Panc1 (cell line): ENCODE measurements at regions of chr7 and their contacts with region 1.

Region 1: GRCh38 chr7:95396136-95397032 is at the start of gene PON3:
- DNase-seq: peak; percentile 61
- ATAC-seq: peak; percentile 89
- H3K4me3 ChIP-seq: peak within 1 kb of the TSS; percentile 45 to 58
- H3K27ac ChIP-seq: no peak within 1 kb of the TSS
- H3K4me1 ChIP-seq: no peaks in the 10 kb centered on the region
- H3K27me3 ChIP-seq: no peaks in the 10 kb centered on the region
- CTCF ChIP-seq: peak; percentile 83
- total RNA-seq, gene PON3: 1.2 TPM

Region 2: DNA sequence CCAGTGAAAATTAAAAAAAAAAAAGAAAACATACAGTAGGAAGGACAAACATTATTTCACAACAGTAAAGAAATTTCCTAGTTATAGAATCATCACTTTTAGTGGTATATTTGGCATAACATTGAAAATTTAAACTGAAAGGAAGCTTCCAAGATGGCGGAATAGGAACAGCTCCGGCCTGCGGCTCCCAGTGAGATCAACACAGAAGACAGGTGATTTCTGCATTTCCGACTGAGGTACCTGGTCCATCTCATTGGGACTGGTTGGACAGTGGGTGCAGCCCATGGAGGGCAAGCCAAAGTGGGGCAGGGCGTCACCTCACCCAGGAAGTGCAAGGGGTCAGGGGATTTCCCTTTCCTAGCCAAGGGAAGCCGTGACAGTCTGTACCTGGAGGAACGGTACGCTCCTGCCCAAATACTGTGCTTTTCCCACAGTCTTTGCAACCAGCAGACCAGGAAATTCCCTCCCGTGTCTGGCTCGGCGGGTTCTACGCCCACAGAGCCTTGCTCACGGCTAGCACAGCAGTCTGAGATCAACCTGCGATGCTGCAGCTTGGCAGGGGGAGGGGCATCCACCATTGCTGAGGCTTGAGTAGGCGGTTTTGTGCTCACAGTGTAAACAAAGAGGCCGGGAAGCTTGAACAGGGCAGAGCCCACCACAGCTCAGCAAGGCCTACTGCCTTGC is 19.6 kb before region 1 on chr7:
- CTCF ChIA-PET with region 1: no interaction called
- POLR2A ChIA-PET with region 1: no interaction called
- in situ Hi-C with region 1: no loop called
- intact Hi-C with region 1: no loop called
- DNase-seq: no peak
- ATAC-seq: no peak
- H3K4me3 ChIP-seq: no peak overlapping the region
- H3K27ac ChIP-seq: no peak overlapping the region
- H3K4me1 ChIP-seq: no peaks in the 10 kb centered on the region
- H3K27me3 ChIP-seq: no peaks in the 10 kb centered on the region
- CTCF ChIP-seq: no peak

Region 3: GRCh38 chr7:95476904-95477594 is 80.7 kb after region 1 on chr7:
- CTCF ChIA-PET with region 1: no interaction called
- POLR2A ChIA-PET with region 1: no interaction called
- in situ Hi-C with region 1: no loop called
- intact Hi-C with region 1: loop called (anchors 5 kb)
- DNase-seq: no peak
- ATAC-seq: peak; percentile 71; the same call in 1 of the 2 replicates
- H3K4me3 ChIP-seq: no peak overlapping the region
- H3K27ac ChIP-seq: no peak overlapping the region
- H3K4me1 ChIP-seq: no peaks in the 10 kb centered on the region
- H3K27me3 ChIP-seq: no peaks in the 10 kb centered on the region
- CTCF ChIP-seq: peak; percentile 76